Dorsolateral prefrontal cortex (tissue), 120 donors: ENCODE measurements at regions of chr3 and their contacts with region 1.

Region 1: GRCh38 chr3:45995236-45996192 is at the start of gene FYCO1:
- DNase-seq: peak; percentile 79 to 95 (median 93)
- H3K4me3 ChIP-seq: peak within 1 kb of the TSS; percentile 69 to 98 (median 89)
- H3K27ac ChIP-seq: peak within 1 kb of the TSS in 57 of 59 donors; percentile 4 to 91 (median 73)
- H3K27me3 ChIP-seq: no peaks in the 10 kb centered on the region
- CTCF ChIP-seq: peak in 18 of 56 donors; percentile 5 to 37 (median 20)
- total RNA-seq, gene FYCO1: 7.9 to 24.8 (median 13.3) TPM

Region 2: DNA sequence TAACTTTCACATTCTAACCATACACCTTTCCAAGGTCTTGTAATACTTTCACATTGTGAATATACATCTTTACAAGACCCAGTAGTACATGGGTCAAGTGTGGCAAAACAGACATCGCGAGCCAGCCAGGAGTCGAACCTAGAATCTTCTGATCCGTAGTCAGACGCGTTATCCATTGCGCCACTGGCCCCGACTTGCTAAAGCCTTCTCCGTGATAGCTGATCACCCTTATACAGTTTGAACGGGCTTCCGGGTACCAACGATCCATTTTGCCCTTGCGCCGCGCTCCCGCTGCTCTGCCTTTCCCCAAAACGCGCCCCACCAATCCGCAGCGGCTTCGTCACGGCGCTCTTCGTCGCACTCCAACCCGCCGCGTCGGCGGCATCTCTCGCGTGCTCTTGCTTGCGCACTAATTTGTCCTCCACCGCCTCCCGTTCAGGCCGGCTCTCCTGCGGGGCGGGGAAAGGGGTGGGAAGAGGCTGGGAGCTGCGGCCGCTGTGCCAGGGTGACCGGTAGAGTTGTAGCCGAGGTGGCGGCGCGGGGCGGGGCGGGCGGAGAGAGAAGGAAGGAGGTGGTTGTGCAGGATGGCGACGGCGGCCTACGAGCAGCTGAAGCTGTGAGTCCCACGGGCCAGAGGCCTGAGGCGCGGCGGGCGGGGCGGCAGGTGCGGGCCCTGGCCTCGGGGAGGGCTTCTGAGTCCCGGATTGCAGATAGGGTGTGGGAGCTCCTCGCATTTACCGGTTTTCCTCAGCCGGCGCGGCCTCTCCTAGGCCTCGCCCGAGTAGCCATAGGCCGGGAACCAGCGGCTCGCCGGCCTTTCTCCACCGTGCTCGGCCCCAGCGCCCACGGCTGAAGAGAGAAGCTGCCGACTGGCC is 306.4 kb before region 1 on chr3 and contains the start of gene SACM1L:
- intact Hi-C with region 1: loop called in 1 of 2 experiments (anchors 5 kb)
- DNase-seq: peak; percentile 92 to 99 (median 96)
- H3K4me3 ChIP-seq: peak within 1 kb of the TSS; percentile 64 to 100 (median 89)
- H3K27ac ChIP-seq: peak within 1 kb of the TSS; percentile 46 to 98 (median 91)
- H3K27me3 ChIP-seq: no peaks in the 10 kb centered on the region
- CTCF ChIP-seq: peak in 26 of 56 donors; percentile 4 to 50 (median 26)
- total RNA-seq, gene SACM1L: 44.0 to 100 (median 73.4) TPM

Region 3: DNA sequence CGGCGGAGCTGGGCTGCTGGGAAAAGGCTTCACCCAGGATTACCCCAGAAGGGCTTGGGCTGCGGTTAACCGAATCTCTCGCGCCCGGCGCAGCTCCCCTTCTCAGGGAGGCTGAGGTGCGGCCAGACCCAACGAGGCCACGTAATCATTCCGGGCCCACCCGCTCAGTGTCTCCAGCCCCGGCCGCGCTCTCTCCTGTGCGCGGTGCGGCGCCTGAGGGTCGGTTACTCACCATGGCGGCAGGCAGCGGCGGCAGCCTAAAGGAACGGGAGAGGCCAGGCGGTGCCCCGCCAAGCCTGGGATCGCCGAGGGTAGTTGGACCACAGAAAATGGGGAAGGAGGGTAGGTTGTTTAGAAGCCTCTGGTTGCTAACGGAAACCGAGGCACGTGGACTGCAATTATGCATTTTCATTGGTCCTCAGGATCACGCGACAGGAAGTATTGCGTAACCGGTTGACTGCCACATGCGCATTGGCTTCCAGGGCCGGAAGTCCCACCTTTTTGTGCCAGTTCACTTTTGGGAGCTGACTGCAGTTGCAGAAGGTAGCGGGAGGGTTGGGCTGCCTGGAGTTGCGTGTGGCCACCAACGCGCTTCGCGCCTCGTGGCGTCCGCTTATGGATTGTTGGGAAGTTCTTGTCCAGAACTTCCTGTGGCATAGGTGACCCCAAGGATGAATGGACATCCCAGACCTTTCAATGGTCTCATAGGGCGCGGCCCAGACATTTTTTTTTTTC is 153.6 kb before region 1 on chr3 and contains the start of gene LZTFL1:
- intact Hi-C with region 1: loop called in 1 of 2 experiments (anchors 5 kb)
- DNase-seq: peak; percentile 78 to 94 (median 92)
- H3K4me3 ChIP-seq: peak within 1 kb of the TSS; percentile 60 to 100 (median 93)
- H3K27ac ChIP-seq: peak within 1 kb of the TSS in 21 of 59 donors; percentile 9 to 73 (median 53)
- H3K27me3 ChIP-seq: no peaks in the 10 kb centered on the region
- CTCF ChIP-seq: peak in 7 of 56 donors; percentile 4 to 17 (median 11)
- total RNA-seq, gene LZTFL1: 18.7 to 71.8 (median 48.5) TPM

Region 4: DNA sequence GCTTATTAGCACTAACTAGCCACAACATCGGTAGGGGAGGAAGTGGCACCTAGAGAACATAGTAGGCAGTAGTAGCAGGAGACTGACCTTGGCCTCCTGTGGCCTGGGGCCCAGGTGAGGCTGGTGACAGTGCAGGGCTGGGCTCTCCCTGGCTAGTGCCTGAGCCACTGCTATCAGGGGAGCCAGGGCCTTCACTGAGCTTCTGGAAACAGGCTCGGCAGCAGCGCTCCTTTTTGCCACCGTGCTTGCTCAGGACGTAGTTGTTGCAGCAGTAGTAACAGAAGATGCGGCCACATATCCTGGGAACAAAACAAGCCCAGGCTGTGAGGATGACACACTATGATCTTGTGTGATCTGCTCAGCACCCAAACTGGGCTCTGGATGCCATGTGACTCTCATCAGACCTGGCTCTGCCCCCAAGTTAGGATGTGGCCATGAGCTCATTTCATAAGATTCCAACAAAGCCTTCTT is 37.2 kb before region 1 on chr3:
- intact Hi-C with region 1: loop called in 1 of 2 experiments (anchors 5 kb)
- DNase-seq: no peak
- H3K4me3 ChIP-seq: no peak overlapping the region
- H3K27ac ChIP-seq: peak overlapping the region in 25 of 59 donors; percentile 6 to 69 (median 31)
- H3K27me3 ChIP-seq: no peaks in the 10 kb centered on the region
- CTCF ChIP-seq: no peak

Region 5: GRCh38 chr3:45972534-45973402 is 22.7 kb before region 1 on chr3:
- intact Hi-C with region 1: no loop called
- DNase-seq: no peak
- H3K4me3 ChIP-seq: no peak overlapping the region
- H3K27ac ChIP-seq: no peak overlapping the region
- H3K27me3 ChIP-seq: no peaks in the 10 kb centered on the region
- CTCF ChIP-seq: no peak